ENCODE measurements at regions of chr14 and their contacts with region 1.

Region 1: GRCh38 chr14:67166450-67166853 is 22.8 kb upstream of the GARIN2 start:
- DNase-seq: peak; percentile 21
- H3K4me3 ChIP-seq: no peak overlapping the region
- H3K27ac ChIP-seq: no peak overlapping the region
- H3K4me1 ChIP-seq: peaks cover 8% of the 10 kb centered on the region
- H3K27me3 ChIP-seq: no peaks in the 10 kb centered on the region
- CTCF ChIP-seq: peak; percentile 83 to 92

Region 2: DNA sequence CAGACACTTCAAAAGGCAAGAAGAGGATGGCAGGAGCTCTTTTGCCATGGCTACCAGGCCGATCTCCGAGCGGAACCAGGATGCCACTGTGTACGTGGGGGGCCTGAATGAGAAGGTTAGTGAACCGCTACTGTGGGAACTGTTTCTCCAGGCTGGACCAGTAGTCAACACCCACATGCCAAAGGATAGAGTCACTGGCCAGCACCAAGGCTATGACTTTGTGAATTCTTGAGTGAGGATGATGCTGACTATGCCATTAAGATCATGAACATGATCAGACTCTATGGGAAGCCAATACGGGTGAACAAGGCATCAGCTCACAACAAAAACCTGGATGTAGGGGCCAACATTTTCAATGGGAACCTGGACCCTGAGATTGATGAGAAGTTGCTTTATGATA is 32.6 kb after region 1 on chr14:
- CTCF ChIA-PET with region 1: no interaction called
- dilution Hi-C with region 1: no loop called
- in situ Hi-C with region 1: no loop called
- intact Hi-C with region 1: no loop called
- DNase-seq: no peak
- H3K4me3 ChIP-seq: no peak overlapping the region
- H3K27ac ChIP-seq: no peak overlapping the region
- H3K4me1 ChIP-seq: no peaks in the 10 kb centered on the region
- H3K27me3 ChIP-seq: no peaks in the 10 kb centered on the region
- CTCF ChIP-seq: no peak

Region 3: DNA sequence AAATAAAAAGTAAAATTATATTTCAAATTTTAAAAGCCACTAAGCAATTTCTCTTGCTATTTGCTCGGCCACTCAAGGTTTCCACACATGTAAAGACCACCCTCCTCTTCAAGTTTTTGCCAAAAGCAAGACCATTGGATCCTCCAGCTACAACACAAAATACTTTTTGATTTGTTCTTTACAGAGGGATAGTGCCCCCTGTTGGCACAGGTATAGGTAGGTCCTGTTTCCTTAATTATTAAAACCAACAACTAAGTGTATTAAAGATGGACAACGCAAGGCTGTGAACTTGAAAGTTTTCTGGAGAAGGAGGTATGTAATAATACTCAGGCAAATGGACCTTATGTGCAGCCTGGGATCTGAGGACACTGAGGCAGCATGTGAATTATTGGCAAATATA is 169.3 kb after region 1 on chr14:
- CTCF ChIA-PET with region 1: no interaction called
- dilution Hi-C with region 1: no loop called
- in situ Hi-C with region 1: no loop called
- intact Hi-C with region 1: loop called (anchors 2 kb)
- DNase-seq: no peak
- H3K4me3 ChIP-seq: no peak overlapping the region
- H3K27ac ChIP-seq: no peak overlapping the region
- H3K4me1 ChIP-seq: peaks cover 20% of the 10 kb centered on the region
- H3K27me3 ChIP-seq: no peaks in the 10 kb centered on the region
- CTCF ChIP-seq: peak; percentile 54

Measured in mammary epithelial cell (primary cell).